CD4-positive, alpha-beta T cell (primary cell): ENCODE measurements at regions of chr6 and their contacts with region 1.

Region 1: GRCh38 chr6:17599885-17600526 is at the start of gene FAM8A1:
- DNase-seq: peak; percentile 93 to 98 (median 96)
- ATAC-seq: peak; percentile 88
- H3K4me3 ChIP-seq: peak within 1 kb of the TSS; percentile 69
- H3K4me3 Mint-ChIP-seq: peak within 1 kb of the TSS; percentile 92
- H3K27ac ChIP-seq: peak within 1 kb of the TSS; percentile 48 to 85
- H3K27ac Mint-ChIP-seq: peak within 1 kb of the TSS; percentile 86
- H3K4me1 ChIP-seq: peaks cover 24% of the 10 kb centered on the region
- H3K4me1 Mint-ChIP-seq: peaks cover 50% of the 10 kb centered on the region
- H3K27me3 ChIP-seq: no peaks in the 10 kb centered on the region
- H3K27me3 Mint-ChIP-seq: no peaks in the 10 kb centered on the region
- CTCF ChIP-seq: peak; percentile 29
- total RNA-seq, gene FAM8A1: 31.4 to 31.9 TPM

Region 2: DNA sequence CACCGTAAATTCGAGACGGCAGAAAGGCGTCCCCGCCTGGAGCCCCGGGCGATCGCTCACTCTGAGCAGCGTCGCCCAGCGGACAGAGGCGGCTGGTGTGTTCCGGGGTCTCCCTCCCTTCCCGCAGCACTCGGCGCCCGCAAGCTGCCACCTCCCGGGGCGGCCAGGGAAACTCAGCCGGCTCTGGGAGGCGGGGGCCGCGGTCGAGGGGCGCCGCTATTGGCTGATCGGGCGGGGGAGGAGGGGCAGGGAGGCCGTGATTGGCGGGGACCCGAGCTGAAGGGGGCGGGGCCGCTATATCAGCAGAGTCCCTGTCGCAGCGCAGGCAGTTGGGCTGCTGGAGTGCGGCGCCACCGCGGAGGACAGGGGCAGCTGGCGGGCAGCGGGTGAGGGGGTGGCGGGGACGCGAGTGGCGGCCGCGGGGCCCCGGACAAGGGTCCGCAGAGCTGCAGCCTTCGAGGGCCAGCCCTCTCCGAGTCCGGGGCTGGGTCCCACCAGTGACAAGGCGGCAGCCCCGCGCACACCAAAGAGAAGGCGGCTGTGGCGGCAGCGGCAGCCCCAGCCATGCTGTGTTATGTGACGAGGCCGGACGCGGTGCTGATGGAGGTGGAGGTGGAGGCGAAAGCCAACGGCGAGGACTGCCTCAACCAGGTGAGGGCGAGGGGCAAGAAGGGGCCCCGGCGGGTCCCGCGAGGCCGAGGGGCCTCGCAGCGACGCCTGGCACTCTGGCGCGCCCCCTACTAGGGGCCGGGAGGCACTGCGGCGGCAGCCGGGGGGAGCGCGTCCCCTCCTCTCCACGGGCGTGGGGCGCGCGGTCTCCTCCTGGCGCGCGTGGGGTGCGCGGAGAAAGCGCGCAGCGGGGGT is 1471.0 kb before region 1 on chr6 and contains the start of gene MYLIP:
- CTCF ChIA-PET with region 1: no interaction called
- POLR2A ChIA-PET with region 1: no interaction called
- intact Hi-C with region 1: loop called in 1 of 2 experiments (anchors 10 kb)
- DNase-seq: peak; percentile 96 to 99 (median 97)
- ATAC-seq: peak; percentile 78
- H3K4me3 ChIP-seq: peak within 1 kb of the TSS; percentile 83
- H3K4me3 Mint-ChIP-seq: peak within 1 kb of the TSS; percentile 99
- H3K27ac ChIP-seq: peak within 1 kb of the TSS; percentile 89 to 92
- H3K27ac Mint-ChIP-seq: peak within 1 kb of the TSS; percentile 98
- H3K4me1 ChIP-seq: peaks cover 19% of the 10 kb centered on the region
- H3K4me1 Mint-ChIP-seq: peaks cover 37% of the 10 kb centered on the region
- H3K27me3 ChIP-seq: no peaks in the 10 kb centered on the region
- H3K27me3 Mint-ChIP-seq: no peaks in the 10 kb centered on the region
- CTCF ChIP-seq: peak; percentile 66
- total RNA-seq, gene MYLIP: 324 TPM

Region 3: DNA sequence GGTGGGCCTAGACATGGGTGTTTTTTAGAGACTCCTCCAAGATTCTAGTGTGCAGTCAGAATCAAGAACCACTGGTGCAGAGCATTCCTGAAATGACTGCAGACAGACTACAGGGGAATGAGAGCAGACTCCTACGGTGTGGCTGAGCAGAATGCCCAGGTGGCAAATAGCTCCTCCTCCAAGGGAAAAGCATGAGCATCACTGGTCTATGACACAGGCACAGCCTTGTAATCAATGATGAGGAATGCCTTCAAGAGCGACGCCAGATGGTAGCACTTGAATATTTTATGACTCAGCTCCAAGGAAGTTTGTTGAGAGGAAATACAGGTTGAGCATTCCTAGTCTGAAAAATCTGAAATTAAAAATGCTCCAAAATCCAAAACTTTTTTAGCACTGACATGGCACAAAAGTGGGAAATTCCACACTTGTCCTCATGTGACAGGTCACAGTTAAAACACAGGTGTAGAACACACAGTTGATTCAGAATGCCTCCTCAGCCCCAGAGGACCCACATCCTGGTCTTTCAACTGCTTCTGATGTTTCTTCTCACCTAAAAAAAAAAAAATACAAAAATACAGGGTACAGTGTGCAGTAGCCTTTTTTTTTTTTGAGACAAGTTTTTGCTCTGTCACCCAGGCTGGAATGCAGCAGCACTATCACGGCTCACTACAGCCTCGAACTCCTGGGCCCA is 10.5 kb before region 1 on chr6:
- CTCF ChIA-PET with region 1: interaction called, 4 read pairs
- POLR2A ChIA-PET with region 1: interaction called, 51 read pairs
- intact Hi-C with region 1: loop called in 1 of 2 experiments (anchors 1 kb)
- DNase-seq: peak in 5 of 14 experiments; percentile 36 to 61 (median 49)
- ATAC-seq: peak; percentile 94
- H3K4me3 ChIP-seq: no peak overlapping the region
- H3K4me3 Mint-ChIP-seq: peak overlapping the region; percentile 31
- H3K27ac ChIP-seq: no peak overlapping the region
- H3K27ac Mint-ChIP-seq: peak overlapping the region; percentile 76
- H3K4me1 ChIP-seq: peaks cover 9% of the 10 kb centered on the region
- H3K4me1 Mint-ChIP-seq: peaks cover 25% of the 10 kb centered on the region
- H3K27me3 ChIP-seq: no peaks in the 10 kb centered on the region
- H3K27me3 Mint-ChIP-seq: no peaks in the 10 kb centered on the region
- CTCF ChIP-seq: peak; percentile 14

Region 4: DNA sequence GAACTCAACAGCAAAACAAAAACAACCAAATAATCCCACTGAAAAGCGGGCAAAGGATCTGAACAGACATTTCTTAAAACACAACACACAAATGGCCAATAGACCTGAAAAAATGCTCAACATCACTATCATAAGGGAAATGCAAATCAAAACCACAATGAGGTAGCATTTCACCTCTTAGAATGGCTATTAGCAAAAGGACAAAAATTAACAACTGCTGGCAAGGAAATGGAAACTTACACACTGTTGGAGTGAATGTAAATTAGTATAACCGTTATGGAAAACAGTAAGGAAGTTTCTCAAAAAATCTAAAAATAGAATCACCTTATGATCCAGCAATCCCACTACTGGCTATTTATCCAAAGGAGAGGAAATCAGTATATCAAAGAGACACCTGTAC is 21.0 kb after region 1 on chr6:
- CTCF ChIA-PET with region 1: interaction called, 4 read pairs
- POLR2A ChIA-PET with region 1: interaction called, 20 read pairs
- intact Hi-C with region 1: loop called in 1 of 2 experiments (anchors 2 kb)
- DNase-seq: no peak
- ATAC-seq: no peak
- H3K4me3 ChIP-seq: no peak overlapping the region
- H3K4me3 Mint-ChIP-seq: no peak overlapping the region
- H3K27ac ChIP-seq: no peak overlapping the region
- H3K27ac Mint-ChIP-seq: peak overlapping the region; percentile 9
- H3K4me1 ChIP-seq: no peaks in the 10 kb centered on the region
- H3K4me1 Mint-ChIP-seq: peaks cover 17% of the 10 kb centered on the region
- H3K27me3 ChIP-seq: no peaks in the 10 kb centered on the region
- H3K27me3 Mint-ChIP-seq: no peaks in the 10 kb centered on the region
- CTCF ChIP-seq: no peak

Region 5: DNA sequence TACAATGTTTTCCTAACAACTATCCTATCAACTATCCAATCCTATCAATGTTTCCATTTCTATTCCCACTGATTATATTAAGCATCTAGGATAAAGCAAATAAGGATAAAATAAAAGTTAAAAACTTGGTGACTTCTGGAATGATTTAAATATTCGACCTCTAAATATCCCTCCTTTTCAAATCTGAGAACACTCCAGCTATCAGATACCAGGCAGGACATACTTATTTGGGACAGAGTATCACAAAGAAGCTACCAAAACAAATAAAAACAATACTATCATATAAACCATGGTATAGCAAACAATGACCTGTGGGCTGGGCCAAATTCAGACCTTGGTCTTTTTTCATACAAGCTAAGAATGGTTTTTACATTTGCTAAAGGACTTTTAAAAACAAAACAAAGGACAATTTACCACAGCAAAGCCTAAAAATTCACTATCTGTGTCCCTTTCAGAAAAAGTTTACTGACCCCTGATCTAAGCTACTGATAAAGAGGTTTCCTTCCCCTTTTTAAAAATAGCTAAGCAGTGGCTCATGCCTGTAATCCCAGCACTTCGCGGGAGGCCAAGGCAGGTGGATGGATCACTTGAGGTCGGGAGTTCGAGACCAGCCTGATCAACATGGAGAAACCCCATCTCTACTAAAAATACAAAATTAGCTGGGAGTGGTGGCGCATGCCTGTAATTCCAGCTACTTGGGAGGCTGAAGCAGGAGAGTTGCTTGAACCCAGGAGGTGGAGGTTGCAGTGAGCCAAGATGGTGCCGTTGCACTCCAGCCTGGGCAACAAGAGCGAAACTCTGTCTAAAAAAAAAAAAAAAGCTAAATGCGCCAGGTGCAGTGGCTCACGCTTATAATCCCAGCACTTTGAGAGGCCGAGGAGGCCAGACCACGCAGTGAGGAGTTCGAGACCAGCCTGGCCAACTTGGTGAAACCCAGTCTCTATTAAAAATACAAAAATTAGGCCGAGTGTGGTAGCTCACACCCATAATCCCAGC is 100.7 kb after region 1 on chr6:
- CTCF ChIA-PET with region 1: no interaction called
- POLR2A ChIA-PET with region 1: interaction called, 94 read pairs
- intact Hi-C with region 1: no loop called
- DNase-seq: no peak
- ATAC-seq: no peak
- H3K4me3 ChIP-seq: no peak overlapping the region
- H3K4me3 Mint-ChIP-seq: peak overlapping the region; percentile 3
- H3K27ac ChIP-seq: no peak overlapping the region
- H3K27ac Mint-ChIP-seq: peak overlapping the region; percentile 56
- H3K4me1 ChIP-seq: peaks cover 53% of the 10 kb centered on the region
- H3K4me1 Mint-ChIP-seq: peaks cover 71% of the 10 kb centered on the region
- H3K27me3 ChIP-seq: no peaks in the 10 kb centered on the region
- H3K27me3 Mint-ChIP-seq: no peaks in the 10 kb centered on the region
- CTCF ChIP-seq: no peak

Region 6: DNA sequence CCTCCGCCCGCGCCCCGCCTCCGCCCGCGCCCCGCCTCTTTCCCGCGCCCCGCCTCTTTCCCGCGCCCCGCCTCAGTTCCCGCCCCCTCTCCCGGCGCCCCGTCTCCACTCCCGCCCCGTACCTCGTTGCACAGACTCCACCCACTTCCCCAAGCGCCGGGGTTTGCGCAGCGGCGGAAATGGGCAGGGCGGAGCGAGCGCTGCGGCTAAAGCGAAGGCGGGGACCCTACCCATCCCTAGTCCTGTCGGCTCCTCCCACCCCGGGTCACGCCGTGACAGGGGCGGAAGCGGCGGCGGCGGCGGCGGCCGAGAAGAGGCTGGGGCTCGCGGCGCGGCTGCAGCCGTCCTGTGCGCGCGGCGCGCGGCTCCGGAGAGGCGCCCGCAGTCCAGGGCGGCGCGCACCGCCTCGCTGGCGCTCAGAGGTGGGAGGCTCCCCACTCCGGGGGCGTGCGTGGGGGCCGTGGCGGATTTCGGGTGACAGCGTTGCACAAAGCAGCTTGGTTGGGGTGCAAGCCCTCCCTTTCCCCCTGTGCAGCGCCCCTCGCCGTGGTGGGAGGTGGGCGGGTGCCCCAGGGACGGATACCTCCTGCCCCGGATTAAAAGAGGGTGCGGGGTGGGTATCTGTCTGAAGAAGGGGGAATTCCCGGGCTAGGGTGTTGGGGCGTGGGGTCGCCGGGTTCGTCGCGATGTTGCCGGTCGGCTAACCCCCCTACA is 555.3 kb after region 1 on chr6 and contains the start of gene KDM1B:
- CTCF ChIA-PET with region 1: no interaction called
- POLR2A ChIA-PET with region 1: interaction called, 3 read pairs
- intact Hi-C with region 1: loop called in 1 of 2 experiments (anchors 1 kb)
- DNase-seq: peak; percentile 97 to 99 (median 98)
- ATAC-seq: peak; percentile 92
- H3K4me3 ChIP-seq: peak within 1 kb of the TSS; percentile 99
- H3K4me3 Mint-ChIP-seq: peak within 1 kb of the TSS; percentile 98
- H3K27ac ChIP-seq: peak within 1 kb of the TSS; percentile 88 to 92
- H3K27ac Mint-ChIP-seq: peak within 1 kb of the TSS; percentile 95
- H3K4me1 ChIP-seq: peaks cover 18% of the 10 kb centered on the region
- H3K4me1 Mint-ChIP-seq: peaks cover 32% of the 10 kb centered on the region
- H3K27me3 ChIP-seq: no peaks in the 10 kb centered on the region
- H3K27me3 Mint-ChIP-seq: no peaks in the 10 kb centered on the region
- CTCF ChIP-seq: no peak
- total RNA-seq, gene KDM1B: 4.4 to 6.0 TPM

Region 7: GRCh38 chr6:18795726-18796125 is 1195.7 kb after region 1 on chr6:
- CTCF ChIA-PET with region 1: no interaction called
- POLR2A ChIA-PET with region 1: no interaction called
- intact Hi-C with region 1: no loop called
- DNase-seq: no peak
- ATAC-seq: no peak
- H3K4me3 ChIP-seq: no peak overlapping the region
- H3K4me3 Mint-ChIP-seq: no peak overlapping the region
- H3K27ac ChIP-seq: no peak overlapping the region
- H3K27ac Mint-ChIP-seq: no peak overlapping the region
- H3K4me1 ChIP-seq: no peaks in the 10 kb centered on the region
- H3K4me1 Mint-ChIP-seq: no peaks in the 10 kb centered on the region
- H3K27me3 ChIP-seq: no peaks in the 10 kb centered on the region
- H3K27me3 Mint-ChIP-seq: no peaks in the 10 kb centered on the region
- CTCF ChIP-seq: no peak